HepG2 (cell line): ENCODE measurements at regions of chr9 and their contacts with region 1.

Region 1: DNA sequence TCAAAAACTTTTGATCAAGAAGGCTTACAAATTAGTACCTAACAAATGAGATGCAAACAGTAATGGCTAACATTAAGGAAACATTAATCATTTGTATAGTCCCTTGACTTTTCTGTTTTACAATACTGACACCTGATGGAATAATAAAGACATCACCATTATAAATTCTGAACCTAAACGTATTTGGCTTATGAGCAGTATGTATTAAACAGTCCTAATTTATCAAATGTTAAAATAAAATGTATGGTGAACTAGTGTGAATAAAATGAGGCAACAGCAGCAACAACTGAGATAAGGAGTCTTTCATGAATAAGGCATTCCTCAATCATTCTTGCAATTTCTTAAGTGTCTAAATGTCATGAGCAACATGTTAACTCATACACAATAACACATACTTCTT is 6.0 kb downstream of the PUM3 start:
- DNase-seq: no peak
- ATAC-seq: no peak
- H3K4me3 ChIP-seq: no peak overlapping the region
- H3K27ac ChIP-seq: no peak overlapping the region
- H3K4me1 ChIP-seq: peaks cover 47% of the 10 kb centered on the region
- H3K27me3 ChIP-seq: no peaks in the 10 kb centered on the region
- CTCF ChIP-seq: no peak
- EP300 ChIP-seq: no peak
- POLR2A ChIP-seq: no peak
- RAD21 ChIP-seq: no peak

Region 2: GRCh38 chr9:2014696-2015580 is 823.0 kb before region 1 on chr9 and contains the start of gene SMARCA2:
- CTCF ChIA-PET with region 1: no interaction called
- POLR2A ChIA-PET with region 1: no interaction called
- in situ Hi-C with region 1: loop called (anchors 25 kb)
- intact Hi-C with region 1: no loop called
- DNase-seq: peak; percentile 87
- ATAC-seq: peak; percentile 86
- H3K4me3 ChIP-seq: peak within 1 kb of the TSS; percentile 76 to 84 (median 84)
- H3K27ac ChIP-seq: peak within 1 kb of the TSS; percentile 67
- H3K4me1 ChIP-seq: peaks cover 19% of the 10 kb centered on the region
- H3K27me3 ChIP-seq: peaks cover 0 to 30% of the 10 kb centered on the region in 2 experiments; a peak in 4 of 5 replicates
- CTCF ChIP-seq: no peak
- EP300 ChIP-seq: no peak
- POLR2A ChIP-seq: peak; percentile 40 to 75; a peak in 3 of 4 replicates
- RAD21 ChIP-seq: no peak
- total RNA-seq, gene SMARCA2: 23.7 and 35.5 TPM in 2 replicates

Region 3: DNA sequence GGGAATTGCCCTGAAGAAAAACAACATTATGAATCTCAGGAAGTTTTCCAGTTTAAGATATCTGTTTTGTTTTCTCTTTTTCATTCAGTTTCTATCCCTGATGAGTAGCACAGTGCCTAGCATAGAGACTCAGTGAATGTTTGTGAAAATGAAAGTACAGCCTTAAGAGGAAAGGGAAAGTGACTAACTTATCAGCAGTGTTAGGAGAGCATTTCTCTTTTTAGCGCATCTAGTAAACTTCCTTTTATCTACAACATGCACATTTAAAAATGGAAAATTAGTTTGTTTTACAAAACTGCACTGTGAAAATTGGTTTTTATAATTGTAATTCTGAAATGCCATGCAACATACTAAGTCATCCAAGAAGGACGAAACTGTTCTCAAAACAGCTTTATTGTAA is 712.0 kb before region 1 on chr9:
- CTCF ChIA-PET with region 1: no interaction called
- POLR2A ChIA-PET with region 1: no interaction called
- in situ Hi-C with region 1: no loop called
- intact Hi-C with region 1: loop called (anchors 10 kb)
- DNase-seq: no peak
- ATAC-seq: no peak
- H3K4me3 ChIP-seq: no peak overlapping the region
- H3K27ac ChIP-seq: no peak overlapping the region
- H3K4me1 ChIP-seq: no peaks in the 10 kb centered on the region
- H3K27me3 ChIP-seq: no peaks in the 10 kb centered on the region
- CTCF ChIP-seq: no peak
- EP300 ChIP-seq: no peak
- POLR2A ChIP-seq: no peak
- RAD21 ChIP-seq: no peak

Region 4: GRCh38 chr9:2228132-2228531 is 609.8 kb before region 1 on chr9:
- CTCF ChIA-PET with region 1: no interaction called
- POLR2A ChIA-PET with region 1: no interaction called
- in situ Hi-C with region 1: no loop called
- intact Hi-C with region 1: no loop called
- DNase-seq: no peak
- ATAC-seq: peak; percentile 37; the same call in 1 of the 3 replicates
- H3K4me3 ChIP-seq: no peak overlapping the region
- H3K27ac ChIP-seq: no peak overlapping the region
- H3K4me1 ChIP-seq: peaks cover 15% of the 10 kb centered on the region
- H3K27me3 ChIP-seq: no peaks in the 10 kb centered on the region
- CTCF ChIP-seq: peak; percentile 33
- EP300 ChIP-seq: no peak
- POLR2A ChIP-seq: no peak
- RAD21 ChIP-seq: no peak

Region 5: DNA sequence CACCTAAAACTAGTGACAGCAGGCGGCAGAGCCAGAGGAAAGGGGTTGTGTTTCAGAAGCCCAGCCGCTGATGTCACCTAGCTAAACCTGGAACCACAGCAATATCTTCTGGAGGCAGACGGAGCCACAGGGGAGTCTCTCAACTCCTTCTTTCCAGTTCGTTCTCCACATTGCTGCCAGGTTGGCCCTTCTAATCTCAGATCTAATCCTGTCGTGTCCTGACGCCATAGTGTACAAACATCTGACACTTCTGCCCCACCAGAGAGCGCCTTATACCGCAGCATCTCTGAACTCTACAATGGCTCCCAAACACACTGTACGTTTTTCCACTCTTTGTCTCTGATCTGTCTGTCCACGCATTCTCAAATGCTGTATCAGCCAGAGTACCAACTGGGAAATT is 582.8 kb before region 1 on chr9:
- CTCF ChIA-PET with region 1: no interaction called
- POLR2A ChIA-PET with region 1: no interaction called
- in situ Hi-C with region 1: no loop called
- intact Hi-C with region 1: loop called (anchors 10 kb)
- DNase-seq: peak; percentile 17
- ATAC-seq: peak; percentile 93
- H3K4me3 ChIP-seq: no peak overlapping the region
- H3K27ac ChIP-seq: no peak overlapping the region
- H3K4me1 ChIP-seq: no peaks in the 10 kb centered on the region
- H3K27me3 ChIP-seq: no peaks in the 10 kb centered on the region
- CTCF ChIP-seq: peak; percentile 65
- EP300 ChIP-seq: no peak
- POLR2A ChIP-seq: no peak
- RAD21 ChIP-seq: no peak

Region 6: DNA sequence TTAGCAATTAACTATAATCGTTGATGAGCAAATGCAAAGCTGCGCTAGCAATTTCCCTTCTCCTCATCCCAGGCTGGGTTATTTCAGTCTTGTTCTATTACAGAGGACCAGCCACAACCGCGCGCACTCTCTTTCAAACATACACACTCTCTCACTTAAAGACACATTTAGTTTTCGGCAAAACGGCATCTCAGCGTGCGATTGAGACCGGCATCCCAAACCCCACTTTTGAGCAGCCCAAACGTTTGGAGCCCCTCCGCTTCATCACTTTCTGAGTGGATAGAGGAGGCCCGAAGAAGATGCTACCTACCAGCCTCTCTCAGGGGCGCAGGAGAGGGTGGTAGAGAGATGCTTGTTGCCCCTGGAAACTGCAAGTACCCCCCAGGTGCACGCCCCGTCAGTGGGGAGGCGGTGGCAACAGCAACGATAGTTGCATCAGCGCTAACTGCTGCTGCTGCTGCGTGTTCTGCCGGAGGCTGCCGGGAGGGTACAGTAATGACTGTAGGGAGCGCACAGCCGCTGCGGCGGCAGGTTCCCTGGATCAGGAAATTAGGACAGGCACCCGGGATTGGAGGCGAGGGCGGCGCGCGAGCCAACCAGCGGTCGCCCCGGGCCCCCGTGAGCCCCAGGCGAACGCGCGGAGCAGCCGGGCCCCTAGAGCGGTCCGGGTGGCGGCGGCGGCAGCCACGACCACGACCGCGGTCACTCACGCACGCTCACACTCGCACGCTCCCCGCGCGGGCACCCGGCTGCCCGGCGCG is 216.8 kb before region 1 on chr9:
- CTCF ChIA-PET with region 1: no interaction called
- POLR2A ChIA-PET with region 1: no interaction called
- in situ Hi-C with region 1: no loop called
- intact Hi-C with region 1: loop called (anchors 5 kb)
- DNase-seq: peak; percentile 36
- ATAC-seq: peak; percentile 83
- H3K4me3 ChIP-seq: peak overlapping the region; percentile 49 to 74 (median 65); a peak in 5 of 6 replicates
- H3K27ac ChIP-seq: no peak overlapping the region
- H3K4me1 ChIP-seq: peaks cover 24% of the 10 kb centered on the region
- H3K27me3 ChIP-seq: peaks cover 4 to 21% of the 10 kb centered on the region in 2 experiments; a peak in 4 of 5 replicates
- CTCF ChIP-seq: peak; percentile 32; the same call in 1 of the 2 replicates
- EP300 ChIP-seq: no peak
- POLR2A ChIP-seq: no peak
- RAD21 ChIP-seq: peak; percentile 33; the same call in 1 of the 2 replicates

Region 7: GRCh38 chr9:2809691-2810433 is 28.1 kb before region 1 on chr9:
- CTCF ChIA-PET with region 1: no interaction called
- POLR2A ChIA-PET with region 1: interaction called, 3 read pairs
- in situ Hi-C with region 1: no loop called
- intact Hi-C with region 1: loop called (anchors 5 kb)
- DNase-seq: peak; percentile 89
- ATAC-seq: peak; percentile 87
- H3K4me3 ChIP-seq: no peak overlapping the region; a peak in 1 of 6 replicates
- H3K27ac ChIP-seq: peak overlapping the region; percentile 80
- H3K4me1 ChIP-seq: peaks cover 38% of the 10 kb centered on the region
- H3K27me3 ChIP-seq: no peaks in the 10 kb centered on the region
- CTCF ChIP-seq: no peak
- EP300 ChIP-seq: peak in 1 of 2 experiments; percentile 35; a peak in 2 of 4 replicates
- POLR2A ChIP-seq: no peak
- RAD21 ChIP-seq: no peak

Region 8: GRCh38 chr9:3508521-3509291 is 670.8 kb after region 1 on chr9:
- CTCF ChIA-PET with region 1: no interaction called
- POLR2A ChIA-PET with region 1: no interaction called
- in situ Hi-C with region 1: loop called (anchors 25 kb)
- intact Hi-C with region 1: no loop called
- DNase-seq: no peak
- ATAC-seq: no peak
- H3K4me3 ChIP-seq: no peak overlapping the region
- H3K27ac ChIP-seq: no peak overlapping the region
- H3K4me1 ChIP-seq: peaks cover 19% of the 10 kb centered on the region
- H3K27me3 ChIP-seq: no peaks in the 10 kb centered on the region
- CTCF ChIP-seq: no peak
- EP300 ChIP-seq: no peak
- POLR2A ChIP-seq: no peak
- RAD21 ChIP-seq: no peak